ENCODE measurements at regions of chr11 and their contacts with region 1.

Region 1: DNA sequence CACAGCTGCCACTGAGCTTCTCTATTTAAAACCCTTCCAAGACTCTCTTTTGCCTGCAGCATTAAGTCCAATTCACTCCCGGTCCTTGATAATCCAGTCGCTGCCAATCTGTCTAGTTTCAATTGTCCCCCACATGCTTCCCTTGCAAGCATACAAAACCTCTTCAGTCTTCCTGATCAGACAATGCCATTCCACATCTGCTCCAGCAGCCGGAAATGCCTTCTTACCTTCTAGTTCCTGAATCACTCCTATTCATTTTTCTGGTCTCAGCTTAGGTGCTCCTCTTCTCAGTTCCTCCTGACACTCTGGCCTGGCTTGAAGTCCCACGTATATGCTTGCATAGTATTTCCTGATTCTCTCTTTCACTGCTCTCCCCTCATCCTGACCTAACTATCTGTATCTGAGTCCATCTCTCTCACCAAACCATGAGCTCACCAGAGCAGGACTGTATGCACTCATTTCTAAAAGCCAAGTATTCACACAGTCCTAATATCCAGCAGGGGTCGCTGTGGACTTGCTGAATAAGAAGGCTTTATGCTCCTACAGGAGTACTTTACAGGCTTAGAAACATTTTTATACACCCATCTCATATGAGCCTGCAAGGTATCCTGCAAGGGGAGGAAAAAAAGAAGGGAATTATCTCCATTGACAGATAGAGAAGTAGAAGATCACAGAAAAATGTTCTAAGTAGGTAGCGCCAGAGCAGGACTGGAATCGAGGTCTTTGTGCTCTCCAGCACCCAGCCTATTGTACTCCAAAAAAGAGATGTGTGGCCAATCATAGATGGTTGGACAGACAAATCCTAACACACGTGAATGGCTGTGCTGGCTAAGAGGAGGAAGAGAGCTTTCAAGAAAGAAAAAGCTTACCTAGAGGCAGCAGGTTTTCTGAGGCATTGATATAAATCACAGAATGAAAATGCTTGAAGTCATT is 19.2 kb downstream of the XRRA1 start:
- DNase-seq: peak; percentile 27 to 57
- ATAC-seq: peak; percentile 85 to 95 (median 90)
- H3K4me3 ChIP-seq: no peak overlapping the region
- H3K27ac ChIP-seq: no peak overlapping the region
- H3K4me1 ChIP-seq: no peaks in the 10 kb centered on the region
- H3K27me3 ChIP-seq: no peaks in the 10 kb centered on the region
- CTCF ChIP-seq: peak; percentile 87

Region 2: GRCh38 chr11:74820763-74821162 is 108.9 kb before region 1 on chr11:
- intact Hi-C with region 1: no loop called
- DNase-seq: no peak
- ATAC-seq: peak in 3 of 4 donors; percentile 49 to 56 (median 53)
- H3K4me3 ChIP-seq: no peak overlapping the region
- H3K27ac ChIP-seq: no peak overlapping the region
- H3K4me1 ChIP-seq: peaks cover 20% of the 10 kb centered on the region
- H3K27me3 ChIP-seq: no peaks in the 10 kb centered on the region
- CTCF ChIP-seq: no peak

Region 3: GRCh38 chr11:75031771-75032549 is 102.3 kb after region 1 on chr11:
- intact Hi-C with region 1: loop called (anchors 1 to 2 kb)
- DNase-seq: peak; percentile 76 to 89
- ATAC-seq: peak; percentile 78 to 94 (median 81)
- H3K4me3 ChIP-seq: no peak overlapping the region
- H3K27ac ChIP-seq: no peak overlapping the region
- H3K4me1 ChIP-seq: peaks cover 13% of the 10 kb centered on the region
- H3K27me3 ChIP-seq: no peaks in the 10 kb centered on the region
- CTCF ChIP-seq: peak; percentile 73

Region 4: GRCh38 chr11:75135651-75136050 is 206.0 kb after region 1 on chr11:
- intact Hi-C with region 1: loop called in 1 of 2 experiments (anchors 2 kb)
- DNase-seq: no peak
- ATAC-seq: no peak
- H3K4me3 ChIP-seq: no peak overlapping the region
- H3K27ac ChIP-seq: no peak overlapping the region
- H3K4me1 ChIP-seq: no peaks in the 10 kb centered on the region
- H3K27me3 ChIP-seq: peaks cover 0 to 16% (median 1%) of the 10 kb centered on the region in 3 donors
- CTCF ChIP-seq: no peak

Region 5: DNA sequence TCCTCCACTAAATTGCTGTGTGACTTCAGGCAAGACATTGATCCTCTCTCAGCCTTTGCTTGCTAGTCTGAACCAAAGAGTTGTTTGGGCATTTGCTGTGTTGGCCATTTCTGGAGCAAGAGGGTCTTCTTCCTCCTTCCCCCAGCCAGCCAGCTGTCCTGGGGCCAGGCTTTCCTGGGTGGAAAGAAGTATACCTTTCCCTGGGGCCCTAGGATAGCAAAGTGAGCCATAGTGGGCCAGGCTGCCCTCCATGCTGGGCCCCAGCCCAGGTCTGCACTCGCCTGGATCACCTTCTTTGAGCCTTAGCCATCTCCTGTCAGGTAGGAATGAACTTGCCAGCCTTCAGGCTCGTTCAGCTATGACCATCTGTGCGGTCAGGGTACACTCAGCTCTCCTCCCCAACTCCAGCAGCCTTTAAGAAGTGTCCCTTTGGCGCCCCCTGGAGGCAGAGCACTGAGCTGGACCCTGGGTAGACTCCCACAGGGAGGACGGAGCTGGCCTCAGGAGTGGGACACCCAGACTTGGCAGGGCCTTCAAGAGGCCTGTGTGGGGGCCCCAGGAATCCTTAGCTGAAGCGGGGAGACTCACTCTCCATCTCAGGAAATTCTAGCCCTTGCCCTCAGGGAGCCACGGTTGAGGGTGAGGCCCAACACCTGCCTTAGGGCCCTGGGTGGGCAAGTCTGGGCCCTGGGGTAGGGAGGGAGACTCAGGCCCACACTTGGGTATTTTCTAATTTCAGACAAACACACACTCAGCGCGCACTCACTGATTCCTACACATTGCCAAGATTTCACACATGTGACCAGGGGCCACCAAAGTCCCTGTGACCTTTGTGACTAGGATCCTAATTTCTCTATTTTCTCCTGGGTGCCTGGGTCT is 275.2 kb after region 1 on chr11:
- intact Hi-C with region 1: loop called in 1 of 2 experiments (anchors 5 kb)
- DNase-seq: peak; percentile 87 to 92
- ATAC-seq: peak; percentile 88 to 95 (median 92)
- H3K4me3 ChIP-seq: no peak overlapping the region
- H3K27ac ChIP-seq: no peak overlapping the region
- H3K4me1 ChIP-seq: no peaks in the 10 kb centered on the region
- H3K27me3 ChIP-seq: peaks cover 0 to 4% (median 0%) of the 10 kb centered on the region in 3 donors
- CTCF ChIP-seq: peak; percentile 85

Region 6: DNA sequence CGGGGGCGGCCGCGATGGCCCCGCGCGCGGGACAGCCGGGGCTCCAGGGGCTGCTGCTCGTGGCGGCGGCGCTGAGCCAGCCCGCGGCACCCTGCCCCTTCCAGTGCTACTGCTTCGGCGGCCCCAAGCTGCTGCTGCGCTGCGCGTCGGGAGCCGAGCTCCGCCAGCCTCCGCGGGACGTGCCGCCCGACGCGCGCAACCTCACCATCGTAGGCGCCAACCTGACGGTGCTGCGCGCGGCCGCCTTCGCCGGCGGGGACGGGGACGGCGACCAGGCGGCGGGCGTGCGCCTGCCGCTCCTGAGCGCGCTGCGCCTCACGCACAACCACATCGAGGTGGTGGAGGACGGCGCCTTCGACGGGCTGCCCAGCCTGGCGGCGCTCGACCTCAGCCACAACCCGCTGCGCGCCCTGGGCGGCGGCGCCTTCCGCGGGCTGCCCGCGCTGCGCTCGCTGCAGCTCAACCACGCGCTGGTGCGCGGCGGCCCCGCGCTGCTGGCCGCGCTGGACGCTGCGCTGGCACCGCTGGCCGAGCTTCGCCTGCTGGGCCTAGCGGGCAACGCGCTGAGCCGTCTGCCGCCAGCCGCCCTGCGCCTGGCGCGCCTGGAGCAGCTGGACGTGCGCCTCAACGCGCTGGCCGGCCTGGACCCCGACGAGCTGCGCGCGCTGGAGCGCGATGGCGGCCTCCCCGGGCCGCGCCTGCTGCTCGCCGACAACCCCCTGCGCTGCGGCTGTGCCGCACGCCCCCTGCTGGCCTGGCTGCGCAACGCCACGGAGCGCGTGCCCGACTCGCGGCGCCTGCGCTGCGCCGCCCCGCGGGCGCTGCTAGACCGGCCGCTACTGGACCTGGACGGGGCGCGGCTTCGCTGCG is 311.6 kb after region 1 on chr11:
- intact Hi-C with region 1: loop called in 1 of 2 experiments (anchors 5 kb)
- DNase-seq: peak; percentile 84 to 91
- ATAC-seq: peak; percentile 95 to 98 (median 96)
- H3K4me3 ChIP-seq: peak overlapping the region; percentile 53
- H3K27ac ChIP-seq: no peak overlapping the region
- H3K4me1 ChIP-seq: peaks cover 3% of the 10 kb centered on the region
- H3K27me3 ChIP-seq: peaks cover 0 to 29% (median 14%) of the 10 kb centered on the region in 3 donors
- CTCF ChIP-seq: peak; percentile 95

Region 7: GRCh38 chr11:75248690-75249268 is 319.1 kb after region 1 on chr11:
- intact Hi-C with region 1: loop called (anchors 1 to 5 kb)
- DNase-seq: peak; percentile 85 to 93
- ATAC-seq: peak; percentile 88 to 98 (median 94)
- H3K4me3 ChIP-seq: no peak overlapping the region
- H3K27ac ChIP-seq: no peak overlapping the region
- H3K4me1 ChIP-seq: peaks cover 4% of the 10 kb centered on the region
- H3K27me3 ChIP-seq: no peaks in the 10 kb centered on the region
- CTCF ChIP-seq: peak; percentile 99